ENCODE measurements at regions of chr2 and their contacts with region 1.

Region 1: GRCh38 chr2:161308178-161308955 is at the start of gene PSMD14:
- DNase-seq: peak; percentile 95
- ATAC-seq: peak; percentile 98
- H3K4me3 ChIP-seq: peak within 1 kb of the TSS; percentile 80 to 87 (median 82)
- H3K27ac ChIP-seq: peak within 1 kb of the TSS; percentile 88
- H3K4me1 ChIP-seq: peaks cover 26% of the 10 kb centered on the region
- H3K27me3 ChIP-seq: no peaks in the 10 kb centered on the region; a peak in 1 of 5 replicates
- CTCF ChIP-seq: peak; percentile 29; the same call in 1 of the 2 replicates
- EP300 ChIP-seq: no peak
- POLR2A ChIP-seq: peak; percentile 92 to 97
- RAD21 ChIP-seq: no peak
- total RNA-seq, gene PSMD14: 149 and 231 TPM in 2 replicates

Region 2: DNA sequence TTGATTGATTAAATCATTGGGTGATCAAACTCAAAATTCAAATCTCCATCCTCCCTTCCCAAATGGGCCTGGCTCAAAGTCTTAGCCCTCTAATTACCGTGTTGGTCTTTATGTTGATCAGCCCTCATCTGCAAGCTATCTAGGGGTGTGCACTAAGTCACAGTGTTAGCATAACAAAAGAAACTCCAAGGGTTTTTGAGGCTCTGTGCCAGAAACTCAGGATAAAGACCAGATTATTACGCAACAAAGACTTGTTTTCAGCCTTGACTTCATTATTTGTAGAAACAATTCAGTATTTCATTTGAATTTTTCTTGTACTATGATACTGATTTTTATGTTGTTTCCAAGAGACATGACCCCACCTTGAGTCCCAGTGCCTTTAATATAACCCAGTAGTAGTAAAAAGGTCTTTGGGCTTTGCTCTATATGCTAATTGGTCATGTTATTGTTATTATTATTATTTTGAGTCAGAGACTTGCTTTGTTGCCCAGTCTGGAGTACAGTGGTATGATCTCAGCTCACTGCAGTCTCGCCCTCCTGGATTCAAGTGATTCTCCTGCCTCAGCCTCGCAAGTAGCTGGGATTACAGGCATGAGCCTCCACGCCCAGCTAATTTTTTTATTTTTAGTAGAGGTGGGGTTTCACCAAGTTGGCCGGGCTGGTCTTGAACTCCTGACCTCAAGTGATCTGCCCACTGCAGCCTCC is 13.7 kb after region 1 on chr2:
- CTCF ChIA-PET with region 1: no interaction called
- POLR2A ChIA-PET with region 1: interaction called, 8 read pairs
- in situ Hi-C with region 1: no loop called
- intact Hi-C with region 1: loop called (anchors 1 kb)
- DNase-seq: no peak
- ATAC-seq: no peak
- H3K4me3 ChIP-seq: no peak overlapping the region
- H3K27ac ChIP-seq: no peak overlapping the region
- H3K4me1 ChIP-seq: no peaks in the 10 kb centered on the region
- H3K27me3 ChIP-seq: no peaks in the 10 kb centered on the region
- CTCF ChIP-seq: no peak
- EP300 ChIP-seq: no peak
- POLR2A ChIP-seq: no peak
- RAD21 ChIP-seq: no peak

Region 3: GRCh38 chr2:161362568-161363166 is 54.3 kb after region 1 on chr2:
- CTCF ChIA-PET with region 1: no interaction called
- POLR2A ChIA-PET with region 1: no interaction called
- in situ Hi-C with region 1: no loop called
- intact Hi-C with region 1: loop called (anchors 5 kb)
- DNase-seq: no peak
- ATAC-seq: no peak
- H3K4me3 ChIP-seq: no peak overlapping the region
- H3K27ac ChIP-seq: no peak overlapping the region
- H3K4me1 ChIP-seq: peaks cover 20% of the 10 kb centered on the region; the same call in 1 of the 2 replicates
- H3K27me3 ChIP-seq: no peaks in the 10 kb centered on the region
- CTCF ChIP-seq: no peak
- EP300 ChIP-seq: no peak
- POLR2A ChIP-seq: no peak
- RAD21 ChIP-seq: no peak

Region 4: GRCh38 chr2:161391737-161392506 is 83.6 kb after region 1 on chr2:
- CTCF ChIA-PET with region 1: no interaction called
- POLR2A ChIA-PET with region 1: no interaction called
- in situ Hi-C with region 1: no loop called
- intact Hi-C with region 1: loop called (anchors 5 kb)
- DNase-seq: no peak
- ATAC-seq: no peak
- H3K4me3 ChIP-seq: no peak overlapping the region
- H3K27ac ChIP-seq: no peak overlapping the region
- H3K4me1 ChIP-seq: no peaks in the 10 kb centered on the region
- H3K27me3 ChIP-seq: no peaks in the 10 kb centered on the region
- CTCF ChIP-seq: no peak
- EP300 ChIP-seq: no peak
- POLR2A ChIP-seq: no peak
- RAD21 ChIP-seq: no peak

Region 5: GRCh38 chr2:161414042-161415033 is 106.0 kb after region 1 on chr2:
- CTCF ChIA-PET with region 1: no interaction called
- POLR2A ChIA-PET with region 1: interaction called, 3 read pairs
- in situ Hi-C with region 1: no loop called
- intact Hi-C with region 1: loop called (anchors 5 kb)
- DNase-seq: peak; percentile 23
- ATAC-seq: peak; percentile 81
- H3K4me3 ChIP-seq: peak overlapping the region; percentile 47 to 76 (median 68)
- H3K27ac ChIP-seq: no peak overlapping the region
- H3K4me1 ChIP-seq: peaks cover 44% of the 10 kb centered on the region
- H3K27me3 ChIP-seq: peaks cover 16 to 46% of the 10 kb centered on the region in 2 experiments
- CTCF ChIP-seq: peak; percentile 49
- EP300 ChIP-seq: no peak
- POLR2A ChIP-seq: no peak
- RAD21 ChIP-seq: 0 out of 2 replicates have a peak, but pooled peaks have one; percentile 26